Motor neuron (in vitro differentiated cells): ENCODE measurements at regions of chr6 and their contacts with region 1.

Region 1: GRCh38 chr6:27518881-27519795 is 46.2 kb upstream of the ZNF184 start:
- ATAC-seq: peak; percentile 86 to 90 (median 88)
- H3K4me3 ChIP-seq: peak overlapping the region; percentile 56 to 86 (median 80)
- H3K27ac ChIP-seq: peak overlapping the region in 1 of 2 donors; percentile 54
- H3K4me1 ChIP-seq: no peaks in the 10 kb centered on the region

Region 2: DNA sequence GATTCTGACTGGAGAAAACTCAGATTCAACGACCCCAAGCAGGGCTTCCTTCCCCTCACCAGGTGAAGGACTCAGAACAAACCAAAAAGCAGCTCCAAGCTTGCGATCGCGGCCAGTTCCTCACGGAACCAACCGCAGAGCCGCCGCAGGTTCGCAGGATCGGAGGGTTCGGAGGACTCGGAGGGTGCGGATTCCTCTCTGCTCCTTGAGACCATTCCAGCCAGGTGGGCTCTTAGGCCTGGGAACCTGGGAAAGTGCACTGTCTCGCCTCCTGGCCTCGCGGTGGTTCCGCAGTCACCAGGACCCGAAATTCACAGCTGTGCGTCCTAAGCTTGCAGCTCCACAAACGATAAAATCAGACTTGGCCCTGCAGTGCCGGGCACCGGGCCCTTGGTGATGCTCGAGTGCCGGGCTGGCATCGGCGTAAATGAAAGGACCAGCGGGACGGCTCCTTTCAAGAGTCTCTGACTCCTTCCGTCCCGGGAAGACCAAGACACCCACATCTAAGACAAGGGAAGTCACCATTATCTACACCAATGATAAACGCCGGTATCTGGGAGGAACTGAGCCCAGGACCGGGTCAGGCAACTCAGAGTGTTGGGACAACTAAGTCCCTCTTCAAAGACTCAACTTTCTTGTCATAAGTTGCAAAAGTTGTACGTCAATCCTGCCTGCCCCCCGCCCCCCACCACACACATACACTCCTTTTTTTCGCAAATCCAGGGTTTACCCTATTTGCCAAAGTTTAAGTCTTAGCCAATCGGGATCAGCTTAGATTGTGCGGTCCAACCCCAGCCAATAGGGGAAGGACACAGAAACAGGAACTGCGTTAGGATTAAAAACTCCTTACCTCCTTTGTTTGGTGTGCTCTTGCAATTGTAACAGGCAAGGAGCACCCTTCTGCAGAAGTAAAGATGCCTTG is 341.4 kb before region 1 on chr6:
- in situ Hi-C with region 1: loop called in 1 of 9 experiments (anchors 25 kb)
- ATAC-seq: peak; percentile 81 to 89 (median 86)
- H3K4me3 ChIP-seq: peak overlapping the region; percentile 61 to 97 (median 82)
- H3K27ac ChIP-seq: no peak overlapping the region
- H3K4me1 ChIP-seq: no peaks in the 10 kb centered on the region

Region 3: DNA sequence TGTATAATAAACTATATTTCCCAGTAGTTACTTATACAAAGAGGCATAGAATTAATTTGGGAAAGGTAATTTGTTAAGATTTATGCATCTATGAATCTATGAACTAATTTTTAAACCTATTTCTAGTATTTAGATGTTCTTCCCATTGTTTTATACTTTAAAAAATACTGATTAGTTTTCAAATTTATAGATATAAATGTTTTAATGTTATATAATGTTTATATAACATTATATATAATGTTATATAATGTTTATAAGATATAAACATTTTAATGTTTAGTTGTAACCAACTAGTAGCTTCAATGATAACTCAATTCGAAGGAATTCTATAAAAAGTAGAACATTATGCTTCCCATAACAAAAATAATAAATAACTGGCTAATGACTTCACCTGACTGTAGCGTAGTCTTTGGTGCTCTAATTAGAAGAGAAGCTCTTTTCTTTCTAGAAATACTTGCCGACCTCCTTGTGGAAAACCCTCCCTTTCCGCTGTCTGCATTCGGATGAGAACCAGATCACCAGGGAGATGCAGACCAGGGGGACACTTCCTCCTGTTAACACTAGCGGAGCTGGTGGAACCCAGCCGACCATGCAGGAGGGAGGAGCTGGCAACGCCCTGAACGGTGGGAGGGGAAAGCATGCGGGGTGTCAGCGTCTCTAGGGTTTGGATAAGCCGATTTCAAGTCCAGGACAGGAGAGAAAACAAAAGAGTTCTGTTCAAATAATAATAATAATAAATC is 234.7 kb after region 1 on chr6:
- in situ Hi-C with region 1: loop called in 1 of 9 experiments (anchors 25 kb)
- ATAC-seq: peak; percentile 59 to 81 (median 80)
- H3K4me3 ChIP-seq: peak overlapping the region; percentile 53 to 72 (median 68)
- H3K27ac ChIP-seq: peak overlapping the region in 1 of 2 donors; percentile 19
- H3K4me1 ChIP-seq: no peaks in the 10 kb centered on the region